ENCODE measurements at regions of chr6 and their contacts with region 1.

Region 1: GRCh38 chr6:683742-684440 is 9.0 kb downstream of the EXOC2 start:
- DNase-seq: peak; percentile 38
- H3K4me3 ChIP-seq: peak overlapping the region; percentile 51
- CTCF ChIP-seq: no peak

Region 2: DNA sequence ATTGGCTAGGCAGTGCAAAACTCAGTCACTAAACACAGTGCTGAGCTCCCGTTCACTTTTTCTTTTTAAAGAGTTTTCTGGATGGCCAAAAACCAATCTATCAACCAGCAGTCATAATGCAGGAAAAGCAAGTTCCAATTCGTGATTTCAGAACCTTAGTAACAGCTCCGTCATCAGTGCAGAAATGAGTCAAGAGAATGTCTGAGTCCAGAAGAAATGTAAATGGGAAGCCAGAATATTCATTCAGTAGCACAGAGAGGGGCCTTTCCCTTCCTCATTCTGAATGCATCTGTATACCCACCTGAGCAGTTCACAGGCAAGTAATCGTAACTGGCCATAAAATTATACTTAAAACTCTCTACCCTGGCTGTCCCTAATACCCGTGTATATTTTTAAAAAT is 47.4 kb before region 1 on chr6:
- CTCF ChIA-PET with region 1: no interaction called
- POLR2A ChIA-PET with region 1: no interaction called
- DNase-seq: no peak
- H3K4me3 ChIP-seq: no peak overlapping the region
- CTCF ChIP-seq: no peak

Region 3: DNA sequence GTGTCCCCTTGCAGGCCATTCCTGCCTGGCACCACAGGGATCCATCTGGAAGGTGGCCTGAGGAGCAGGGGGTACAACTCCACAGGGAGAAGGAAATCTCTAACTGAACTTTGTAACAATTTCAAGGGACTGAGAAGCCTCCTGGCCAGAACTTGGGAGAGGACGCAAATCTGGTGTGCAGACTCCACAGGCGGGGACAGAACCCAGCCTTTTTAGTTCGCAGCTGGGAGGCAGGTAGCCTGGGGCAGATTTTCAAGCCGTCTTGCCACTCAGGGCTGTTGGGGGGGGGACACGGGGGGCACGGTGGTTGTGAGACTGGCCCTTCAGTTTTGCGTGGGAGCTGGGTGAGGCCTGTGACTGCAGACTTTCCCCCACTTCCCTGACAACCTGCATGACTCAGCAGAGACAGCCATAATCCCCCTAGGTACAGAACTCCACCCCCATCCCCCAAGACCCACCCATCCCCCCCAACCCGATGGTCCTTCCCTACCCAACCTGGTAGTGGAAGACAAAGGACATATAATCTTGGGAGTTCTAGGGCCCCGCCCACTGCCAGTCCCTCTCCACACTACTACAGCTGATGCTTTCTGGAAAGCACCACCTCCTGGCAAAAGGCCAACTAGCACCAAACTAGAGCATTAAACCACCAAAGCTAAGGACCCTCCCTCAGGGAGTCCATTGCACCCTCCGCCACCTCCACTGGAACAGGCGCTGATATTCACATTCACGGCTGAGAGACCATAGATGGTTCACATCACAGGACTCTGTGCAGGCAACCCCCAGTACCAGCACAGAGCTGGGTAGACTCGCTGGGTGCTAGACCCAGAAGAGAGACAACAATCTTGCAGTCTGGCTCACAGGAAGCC is 23.9 kb before region 1 on chr6:
- CTCF ChIA-PET with region 1: interaction called, 10 read pairs
- POLR2A ChIA-PET with region 1: no interaction called
- DNase-seq: no peak
- H3K4me3 ChIP-seq: no peak overlapping the region
- CTCF ChIP-seq: no peak

Region 4: GRCh38 chr6:701700-702479 is 18.0 kb after region 1 on chr6:
- CTCF ChIA-PET with region 1: no interaction called
- POLR2A ChIA-PET with region 1: no interaction called
- DNase-seq: no peak
- H3K4me3 ChIP-seq: no peak overlapping the region
- CTCF ChIP-seq: no peak